Activated CD4-positive, alpha-beta T cell treated with anti-CD3 and anti-CD28 coated beads for 36 hours (primary cell): ENCODE measurements at regions of chr1 and their contacts with region 1.

Region 1: GRCh38 chr1:192808518-192809306 is at the start of gene RGS2:
- DNase-seq: peak; percentile 92
- ATAC-seq: peak; percentile 93
- H3K4me3 Mint-ChIP-seq: peak within 1 kb of the TSS; percentile 87
- H3K27ac Mint-ChIP-seq: peak within 1 kb of the TSS; percentile 92
- H3K4me1 Mint-ChIP-seq: peaks cover 29% of the 10 kb centered on the region
- H3K27me3 Mint-ChIP-seq: no peaks in the 10 kb centered on the region
- total RNA-seq, gene RGS2: 5.1 to 5.3 TPM

Region 2: DNA sequence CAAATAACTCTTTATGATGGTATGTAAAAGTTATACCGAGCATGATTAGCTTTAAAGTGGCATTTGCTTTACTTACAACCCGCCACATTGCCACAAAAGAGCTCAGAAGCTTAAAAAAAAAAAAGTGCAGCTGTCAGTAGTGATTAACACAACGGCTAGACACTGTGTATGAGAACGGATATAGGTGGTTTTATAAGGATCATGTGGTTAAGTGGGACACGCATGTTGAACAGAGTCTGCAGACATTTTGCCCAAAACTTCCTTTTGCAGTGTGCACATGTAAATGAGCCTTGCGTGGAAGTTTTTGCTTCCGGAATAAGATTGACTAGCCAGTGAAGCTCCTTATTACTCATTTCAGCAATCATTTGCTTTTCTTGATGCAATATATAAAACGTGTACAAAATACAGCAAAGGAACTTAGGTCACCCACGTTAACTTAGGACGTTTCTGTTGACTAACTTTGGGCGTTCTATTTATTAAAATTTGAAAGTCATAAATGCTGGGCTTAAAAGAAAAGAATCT is 291.9 kb before region 1 on chr1:
- CTCF ChIA-PET with region 1: no interaction called
- POLR2A ChIA-PET with region 1: no interaction called
- intact Hi-C with region 1: loop called (anchors 1 to 2 kb)
- DNase-seq: peak; percentile 63
- ATAC-seq: peak; percentile 97
- H3K4me3 Mint-ChIP-seq: peak overlapping the region; percentile 40
- H3K27ac Mint-ChIP-seq: peak overlapping the region; percentile 63
- H3K4me1 Mint-ChIP-seq: peaks cover 62% of the 10 kb centered on the region
- H3K27me3 Mint-ChIP-seq: no peaks in the 10 kb centered on the region

Region 3: DNA sequence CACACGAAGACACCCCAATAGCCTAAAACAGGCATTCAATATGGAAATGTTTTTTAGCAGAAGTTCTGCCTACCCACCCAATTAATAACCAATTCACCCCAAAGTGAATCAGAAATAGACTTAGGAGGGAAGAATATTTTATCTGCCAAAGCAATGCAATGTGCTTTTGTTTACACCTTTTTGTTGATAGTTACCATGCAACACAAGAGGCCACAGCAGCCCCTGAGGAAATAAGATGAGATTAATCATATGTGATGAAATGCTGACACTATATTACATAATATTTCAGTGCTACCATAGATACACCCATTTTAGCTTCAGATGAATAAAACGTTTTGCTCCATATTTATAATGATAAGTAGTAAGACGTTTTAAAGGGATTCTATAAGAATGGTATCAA is 60.8 kb before region 1 on chr1:
- CTCF ChIA-PET with region 1: no interaction called
- POLR2A ChIA-PET with region 1: no interaction called
- intact Hi-C with region 1: no loop called
- DNase-seq: no peak
- ATAC-seq: no peak
- H3K4me3 Mint-ChIP-seq: no peak overlapping the region
- H3K27ac Mint-ChIP-seq: no peak overlapping the region
- H3K4me1 Mint-ChIP-seq: no peaks in the 10 kb centered on the region
- H3K27me3 Mint-ChIP-seq: no peaks in the 10 kb centered on the region

Region 4: GRCh38 chr1:192860478-192861185 is 51.9 kb after region 1 on chr1:
- CTCF ChIA-PET with region 1: no interaction called
- POLR2A ChIA-PET with region 1: no interaction called
- intact Hi-C with region 1: no loop called
- DNase-seq: no peak
- ATAC-seq: no peak
- H3K4me3 Mint-ChIP-seq: no peak overlapping the region
- H3K27ac Mint-ChIP-seq: no peak overlapping the region
- H3K4me1 Mint-ChIP-seq: no peaks in the 10 kb centered on the region
- H3K27me3 Mint-ChIP-seq: no peaks in the 10 kb centered on the region

Region 5: GRCh38 chr1:192936313-192937018 is 127.8 kb after region 1 on chr1:
- CTCF ChIA-PET with region 1: interaction called, 3 read pairs
- POLR2A ChIA-PET with region 1: no interaction called
- intact Hi-C with region 1: loop called (anchors 2 kb)
- DNase-seq: no peak
- ATAC-seq: peak; percentile 85
- H3K4me3 Mint-ChIP-seq: no peak overlapping the region
- H3K27ac Mint-ChIP-seq: peak overlapping the region; percentile 12
- H3K4me1 Mint-ChIP-seq: peaks cover 18% of the 10 kb centered on the region
- H3K27me3 Mint-ChIP-seq: no peaks in the 10 kb centered on the region

Region 6: GRCh38 chr1:193019442-193020026 is 210.8 kb after region 1 on chr1:
- CTCF ChIA-PET with region 1: interaction called, 46 read pairs
- POLR2A ChIA-PET with region 1: no interaction called
- intact Hi-C with region 1: loop called (anchors 1 kb)
- DNase-seq: no peak
- ATAC-seq: no peak
- H3K4me3 Mint-ChIP-seq: no peak overlapping the region
- H3K27ac Mint-ChIP-seq: no peak overlapping the region
- H3K4me1 Mint-ChIP-seq: no peaks in the 10 kb centered on the region
- H3K27me3 Mint-ChIP-seq: no peaks in the 10 kb centered on the region

Region 7: GRCh38 chr1:193121616-193122593 is 313.2 kb after region 1 on chr1 and contains the start of gene CDC73:
- CTCF ChIA-PET with region 1: interaction called, 4 read pairs
- POLR2A ChIA-PET with region 1: no interaction called
- intact Hi-C with region 1: loop called (anchors 1 kb)
- DNase-seq: peak; percentile 99
- ATAC-seq: peak; percentile 94
- H3K4me3 Mint-ChIP-seq: peak within 1 kb of the TSS; percentile 91
- H3K27ac Mint-ChIP-seq: peak within 1 kb of the TSS; percentile 96
- H3K4me1 Mint-ChIP-seq: peaks cover 51% of the 10 kb centered on the region
- H3K27me3 Mint-ChIP-seq: no peaks in the 10 kb centered on the region
- total RNA-seq, gene CDC73: 40.8 to 52.4 TPM